PC-9 (cell line): ENCODE measurements at regions of chr12 and their contacts with region 1.

Region 1: GRCh38 chr12:76763743-76764675 is at the start of gene ZDHHC17:
- DNase-seq: peak; percentile 79 to 96
- H3K4me3 ChIP-seq: peak within 1 kb of the TSS; percentile 99
- H3K27ac ChIP-seq: peak within 1 kb of the TSS; percentile 92
- H3K4me1 ChIP-seq: peaks cover 12% of the 10 kb centered on the region
- H3K27me3 ChIP-seq: no peaks in the 10 kb centered on the region
- CTCF ChIP-seq: no peak
- total RNA-seq, gene ZDHHC17: 24.7 and 25.5 TPM in 2 replicates

Region 2: GRCh38 chr12:76636121-76636692 is 127.8 kb before region 1 on chr12:
- CTCF ChIA-PET with region 1: no interaction called
- POLR2A ChIA-PET with region 1: no interaction called
- intact Hi-C with region 1: loop called (anchors 5 kb)
- DNase-seq: peak; percentile 6 to 39
- H3K4me3 ChIP-seq: no peak overlapping the region
- H3K27ac ChIP-seq: 0 out of 2 replicates have a peak overlapping the region, but pooled peaks have one; percentile 16
- H3K4me1 ChIP-seq: peaks cover 31% of the 10 kb centered on the region; the same call in 1 of the 2 replicates
- H3K27me3 ChIP-seq: no peaks in the 10 kb centered on the region
- CTCF ChIP-seq: no peak

Region 3: DNA sequence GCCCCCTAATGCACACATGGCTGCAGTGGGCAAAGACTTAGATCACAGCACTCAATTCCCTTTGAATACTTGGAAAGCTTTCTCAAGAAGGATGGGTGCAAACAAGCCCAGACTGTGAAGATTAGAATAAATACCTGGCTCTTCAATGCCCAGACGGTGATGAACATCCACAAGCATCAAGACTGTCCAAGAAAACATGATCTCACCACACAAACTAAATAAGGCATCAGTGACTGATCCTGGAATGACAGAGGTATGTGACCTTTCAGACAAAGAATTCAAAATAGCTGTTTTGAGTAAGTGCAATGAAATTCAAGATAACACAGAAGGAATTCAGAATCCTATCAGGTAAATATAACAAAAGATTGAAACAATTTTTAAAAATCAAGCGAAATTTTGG is 43.9 kb before region 1 on chr12:
- CTCF ChIA-PET with region 1: no interaction called
- POLR2A ChIA-PET with region 1: no interaction called
- intact Hi-C with region 1: loop called (anchors 1 kb)
- DNase-seq: peak; percentile 11 to 57
- H3K4me3 ChIP-seq: no peak overlapping the region
- H3K27ac ChIP-seq: no peak overlapping the region
- H3K4me1 ChIP-seq: peaks cover 10% of the 10 kb centered on the region
- H3K27me3 ChIP-seq: no peaks in the 10 kb centered on the region
- CTCF ChIP-seq: no peak